Activated CD8-positive, alpha-beta memory T cell treated with anti-CD3 and anti-CD28 coated beads, Interleukin-2, amount 10 ng/mL, durations not matched to agents 7 days and 5 days (primary cell): ENCODE measurements at regions of chr3 and their contacts with region 1.

Region 1: DNA sequence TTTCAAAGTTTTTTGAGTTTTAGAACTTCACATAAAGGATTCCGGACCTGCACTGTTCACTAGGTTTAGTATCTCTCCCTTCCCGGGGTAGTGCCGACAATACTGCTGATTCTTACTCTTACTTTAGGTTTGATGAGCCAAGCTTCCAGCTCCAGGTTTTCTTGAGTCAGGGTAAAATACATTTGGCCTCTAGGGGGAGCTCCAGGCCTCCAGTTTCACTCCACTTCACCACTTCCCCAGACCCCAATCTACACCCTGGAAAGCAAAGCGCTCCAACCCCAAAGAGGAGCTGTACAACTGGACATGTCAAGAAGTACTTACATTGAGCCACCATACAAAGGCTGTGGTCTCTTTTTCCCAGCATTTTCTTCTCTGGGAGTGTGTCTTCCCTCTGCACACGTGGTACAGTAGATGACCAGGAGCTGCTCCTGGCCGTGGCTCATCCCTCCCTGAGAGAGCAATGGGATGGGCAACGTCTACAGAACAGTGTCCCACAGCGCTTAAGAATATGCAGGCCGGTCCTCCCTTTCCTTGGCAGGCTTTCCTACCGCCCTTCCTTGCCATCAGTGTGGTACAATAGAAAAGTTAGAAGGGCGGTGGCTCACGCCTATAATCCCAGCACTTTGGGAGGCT is 93.9 kb upstream of the CCDC80 start:
- DNase-seq: peak; percentile 79
- ATAC-seq: peak; percentile 64
- H3K4me3 Mint-ChIP-seq: no peak overlapping the region
- H3K27ac Mint-ChIP-seq: peak overlapping the region; percentile 2
- H3K4me1 Mint-ChIP-seq: peaks cover 38% of the 10 kb centered on the region
- H3K27me3 Mint-ChIP-seq: no peaks in the 10 kb centered on the region

Region 2: GRCh38 chr3:112555535-112556170 is 179.2 kb before region 1 on chr3:
- CTCF ChIA-PET with region 1: no interaction called
- DNase-seq: no peak
- ATAC-seq: no peak
- H3K4me3 Mint-ChIP-seq: no peak overlapping the region
- H3K27ac Mint-ChIP-seq: no peak overlapping the region
- H3K4me1 Mint-ChIP-seq: peaks cover 39% of the 10 kb centered on the region
- H3K27me3 Mint-ChIP-seq: no peaks in the 10 kb centered on the region

Region 3: DNA sequence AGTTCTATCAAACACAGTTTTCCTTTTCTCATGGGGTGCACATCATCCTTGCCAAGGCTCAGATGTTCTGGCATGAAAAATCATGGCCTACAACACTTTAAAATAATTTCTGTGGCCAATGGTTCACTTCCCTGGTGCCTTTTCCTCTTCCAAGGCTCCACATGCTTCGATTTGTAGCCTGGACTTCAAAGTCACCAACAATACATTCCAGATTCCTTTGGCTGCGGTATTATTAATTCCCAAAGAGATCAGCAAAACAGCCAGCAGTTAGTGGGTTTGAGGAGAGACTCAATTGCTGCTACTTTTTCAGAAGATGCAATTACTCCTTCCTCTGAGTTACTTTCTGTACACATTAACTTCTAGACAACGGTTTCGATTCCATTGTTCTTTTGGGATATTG is 13.6 kb before region 1 on chr3:
- CTCF ChIA-PET with region 1: interaction called, 11 read pairs
- DNase-seq: no peak
- ATAC-seq: no peak
- H3K4me3 Mint-ChIP-seq: no peak overlapping the region
- H3K27ac Mint-ChIP-seq: no peak overlapping the region
- H3K4me1 Mint-ChIP-seq: no peaks in the 10 kb centered on the region
- H3K27me3 Mint-ChIP-seq: peaks cover 1% of the 10 kb centered on the region

Region 4: GRCh38 chr3:112761062-112761638 is 26.3 kb after region 1 on chr3:
- CTCF ChIA-PET with region 1: interaction called, 18 read pairs
- DNase-seq: no peak
- ATAC-seq: no peak
- H3K4me3 Mint-ChIP-seq: no peak overlapping the region
- H3K27ac Mint-ChIP-seq: no peak overlapping the region
- H3K4me1 Mint-ChIP-seq: peaks cover 2% of the 10 kb centered on the region
- H3K27me3 Mint-ChIP-seq: no peaks in the 10 kb centered on the region

Region 5: DNA sequence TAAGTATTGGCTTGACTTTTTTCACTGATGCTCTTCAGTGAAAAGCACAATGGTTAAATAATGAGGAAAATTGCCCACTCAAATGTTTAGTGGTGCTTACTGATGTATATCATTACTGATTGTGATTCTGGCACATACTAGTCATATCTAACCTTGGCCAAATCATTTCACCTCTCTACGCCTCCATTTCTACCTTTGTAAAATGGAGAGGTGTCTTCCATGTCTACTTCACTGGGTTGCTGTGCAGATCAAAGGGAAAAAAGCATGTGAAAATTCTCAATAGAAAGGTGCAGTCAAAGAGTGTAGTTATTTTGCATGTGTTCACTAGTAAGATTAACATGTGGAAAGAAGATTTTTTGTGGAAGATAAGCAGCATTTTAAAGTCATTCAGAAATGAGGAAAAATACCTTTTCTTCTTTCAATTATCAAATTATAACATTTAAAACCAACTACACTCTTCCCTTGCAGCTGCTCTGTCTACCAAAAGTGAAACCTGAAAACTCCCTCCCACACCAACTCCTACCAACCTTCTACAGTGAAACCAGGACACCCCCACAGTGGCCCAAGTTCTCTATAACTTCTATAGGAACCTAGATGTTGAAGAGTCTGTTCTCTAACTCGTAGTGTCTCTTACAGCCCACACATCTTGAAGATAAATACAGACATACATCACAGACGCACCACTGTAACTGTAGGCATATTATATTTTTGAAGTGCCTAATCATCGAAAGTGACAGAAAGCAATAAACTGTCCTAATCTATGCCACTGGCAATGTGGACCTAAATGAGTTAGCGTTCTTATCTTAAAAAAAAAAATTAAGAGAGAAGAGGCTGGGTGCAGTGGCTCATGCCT is 238.7 kb after region 1 on chr3:
- CTCF ChIA-PET with region 1: interaction called, 73 read pairs
- DNase-seq: peak; percentile 66
- ATAC-seq: peak; percentile 78
- H3K4me3 Mint-ChIP-seq: peak overlapping the region; percentile 87
- H3K27ac Mint-ChIP-seq: peak overlapping the region; percentile 90
- H3K4me1 Mint-ChIP-seq: peaks cover 70% of the 10 kb centered on the region
- H3K27me3 Mint-ChIP-seq: no peaks in the 10 kb centered on the region

Region 6: DNA sequence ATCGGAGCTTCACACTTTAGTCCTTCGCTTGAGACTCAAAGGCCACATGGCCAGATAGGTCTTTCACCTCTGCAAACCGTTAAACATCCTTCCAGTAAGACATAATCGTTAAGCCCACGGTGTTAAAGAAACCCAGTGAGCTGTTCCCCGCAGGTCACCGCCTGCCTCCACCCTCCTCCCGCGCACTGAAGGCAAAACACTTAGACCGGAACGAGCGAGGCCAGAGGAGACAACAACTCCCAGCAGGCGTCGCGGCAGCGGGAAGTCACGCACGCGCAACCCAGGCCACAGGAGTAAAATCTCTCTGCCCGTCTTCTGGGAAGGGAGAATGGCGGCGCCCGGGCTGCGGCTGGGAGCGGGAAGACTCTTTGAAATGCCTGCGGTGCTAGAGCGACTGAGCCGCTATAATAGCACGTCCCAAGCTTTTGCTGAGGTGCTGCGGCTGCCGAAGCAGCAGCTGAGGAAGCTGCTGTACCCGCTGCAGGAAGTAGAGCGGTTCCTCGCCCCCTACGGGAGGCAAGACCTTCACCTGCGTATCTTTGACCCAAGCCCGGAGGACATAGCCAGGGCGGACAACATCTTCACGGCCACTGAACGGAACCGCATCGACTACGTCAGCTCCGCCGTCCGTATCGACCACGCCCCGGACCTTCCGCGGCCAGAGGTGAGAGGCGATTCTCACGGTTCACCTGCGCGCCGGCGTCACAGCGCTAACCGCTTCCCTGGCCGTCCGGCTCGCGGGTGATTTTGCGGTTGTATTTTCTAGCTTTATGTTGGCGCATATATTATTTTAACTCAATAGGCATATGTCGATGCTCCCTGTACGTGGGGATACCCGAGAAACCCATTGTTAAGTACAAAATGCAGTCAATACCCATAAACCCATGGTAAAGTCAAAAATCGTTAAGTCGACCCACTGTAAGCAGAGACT is 256.1 kb after region 1 on chr3 and contains the start of gene GTPBP8:
- CTCF ChIA-PET with region 1: interaction called, 24 read pairs
- DNase-seq: peak; percentile 93
- ATAC-seq: peak; percentile 94
- H3K4me3 Mint-ChIP-seq: peak within 1 kb of the TSS; percentile 81
- H3K27ac Mint-ChIP-seq: peak within 1 kb of the TSS; percentile 93
- H3K4me1 Mint-ChIP-seq: peaks cover 63% of the 10 kb centered on the region
- H3K27me3 Mint-ChIP-seq: no peaks in the 10 kb centered on the region
- total RNA-seq, gene GTPBP8: 24.6 to 25.3 TPM